ENCODE measurements at regions of chr11 and their contacts with region 1.

Region 1: DNA sequence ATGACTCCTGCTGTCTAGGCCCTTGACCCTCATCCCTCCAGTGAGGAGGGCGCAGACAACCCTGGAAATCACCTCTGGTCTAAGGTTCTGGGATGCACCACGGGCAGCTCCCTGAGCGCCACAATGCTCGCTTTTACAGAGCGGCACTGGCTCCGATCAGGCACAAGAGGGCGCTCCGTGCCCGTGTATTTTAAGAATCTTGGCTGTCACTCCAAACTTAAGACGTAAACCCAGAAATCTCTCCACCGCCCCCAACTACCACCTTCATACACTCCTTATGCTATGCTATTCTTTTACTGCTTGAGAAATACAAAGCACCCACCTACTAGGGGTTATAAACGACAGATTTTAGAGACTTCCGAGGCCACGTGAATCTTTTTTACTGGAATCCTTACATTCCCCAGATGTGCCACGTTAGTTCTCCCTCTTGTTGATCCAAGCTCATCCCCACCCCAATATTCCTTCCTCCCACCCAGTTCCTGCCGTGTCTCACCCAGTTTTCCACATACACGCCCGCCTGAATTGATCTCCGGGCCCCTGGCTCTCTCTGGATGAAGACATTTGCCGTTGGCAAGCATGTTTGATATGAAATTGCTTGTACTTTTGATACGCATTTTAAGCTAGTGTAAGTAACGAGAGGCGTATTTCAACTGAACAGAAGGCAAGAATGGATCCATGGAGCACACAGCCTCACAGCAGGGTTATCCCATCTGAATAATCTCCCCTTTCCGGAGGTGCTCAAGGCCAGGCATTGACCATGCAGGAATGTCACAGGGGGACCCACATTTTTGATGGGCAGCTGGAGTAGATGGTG is 453.5 kb downstream of the OPCML start:
- DNase-seq: peak; percentile 43
- H3K4me3 ChIP-seq: no peak overlapping the region
- H3K27ac ChIP-seq: no peak overlapping the region
- H3K4me1 ChIP-seq: no peaks in the 10 kb centered on the region
- CTCF ChIP-seq: peak; percentile 88

Region 2: GRCh38 chr11:132644520-132645239 is 434.1 kb before region 1 on chr11:
- CTCF ChIA-PET with region 1: no interaction called
- POLR2A ChIA-PET with region 1: no interaction called
- intact Hi-C with region 1: no loop called
- DNase-seq: no peak
- H3K4me3 ChIP-seq: no peak overlapping the region
- H3K27ac ChIP-seq: no peak overlapping the region
- H3K4me1 ChIP-seq: no peaks in the 10 kb centered on the region
- CTCF ChIP-seq: no peak

Region 3: DNA sequence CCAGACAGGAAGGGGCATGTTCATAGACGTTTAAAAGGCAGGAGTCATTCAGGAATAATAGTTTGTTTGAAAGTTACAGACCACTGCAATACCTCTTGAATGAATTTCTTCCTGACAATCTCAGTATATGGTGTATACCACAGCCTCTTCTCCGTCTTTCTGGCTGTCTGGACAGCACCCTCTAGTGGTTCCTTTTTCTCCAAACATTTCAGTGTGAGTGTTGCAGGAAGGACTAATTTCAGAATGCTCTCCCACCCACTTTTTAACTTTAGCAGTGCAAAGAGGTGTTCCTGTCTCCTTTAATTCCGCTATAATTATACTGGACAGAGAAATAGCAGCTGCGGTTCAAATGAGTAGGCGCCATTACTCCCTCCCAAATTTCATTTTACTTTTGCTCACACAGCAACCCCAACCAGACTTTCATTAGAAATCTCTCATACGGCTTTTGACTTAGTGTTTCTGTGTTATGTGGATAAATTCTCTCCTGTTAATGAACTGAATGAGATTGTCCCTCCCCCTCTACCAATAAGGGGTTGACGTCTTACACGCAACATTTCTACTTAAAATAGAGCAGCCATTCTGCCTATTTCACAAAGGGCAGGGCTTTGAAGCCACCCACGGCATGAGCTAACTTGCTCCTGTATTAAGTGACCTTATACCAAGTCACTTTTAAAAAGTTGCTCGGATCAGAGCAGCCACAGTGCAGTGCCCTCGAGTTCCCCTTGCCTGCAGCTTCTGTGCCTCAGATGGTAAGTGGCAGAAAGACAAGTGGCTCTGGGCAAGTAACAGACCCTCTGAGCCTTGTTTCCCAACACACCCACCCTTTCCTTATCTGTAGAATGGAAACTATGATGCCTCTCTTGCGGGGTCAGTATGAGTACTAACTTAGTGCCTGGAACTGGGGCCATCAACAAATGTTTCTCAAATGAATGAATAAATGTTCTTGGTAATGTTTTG is 84.9 kb after region 1 on chr11:
- CTCF ChIA-PET with region 1: no interaction called
- POLR2A ChIA-PET with region 1: no interaction called
- intact Hi-C with region 1: loop called (anchors 2 kb)
- DNase-seq: peak; percentile 30
- H3K4me3 ChIP-seq: no peak overlapping the region
- H3K27ac ChIP-seq: no peak overlapping the region
- H3K4me1 ChIP-seq: no peaks in the 10 kb centered on the region
- CTCF ChIP-seq: peak; percentile 85